Endothelial cell of umbilical vein (primary cell): ENCODE measurements at regions of chr16 and their contacts with region 1.

Region 1: GRCh38 chr16:70477354-70477753 is 23.0 kb downstream of the FCSK start:
- DNase-seq: no peak
- H3K4me3 ChIP-seq: no peak overlapping the region
- H3K27ac ChIP-seq: no peak overlapping the region
- H3K4me1 ChIP-seq: peaks cover 23% of the 10 kb centered on the region
- H3K27me3 ChIP-seq: no peaks in the 10 kb centered on the region
- CTCF ChIP-seq: no peak
- POLR2A ChIP-seq: no peak

Region 2: DNA sequence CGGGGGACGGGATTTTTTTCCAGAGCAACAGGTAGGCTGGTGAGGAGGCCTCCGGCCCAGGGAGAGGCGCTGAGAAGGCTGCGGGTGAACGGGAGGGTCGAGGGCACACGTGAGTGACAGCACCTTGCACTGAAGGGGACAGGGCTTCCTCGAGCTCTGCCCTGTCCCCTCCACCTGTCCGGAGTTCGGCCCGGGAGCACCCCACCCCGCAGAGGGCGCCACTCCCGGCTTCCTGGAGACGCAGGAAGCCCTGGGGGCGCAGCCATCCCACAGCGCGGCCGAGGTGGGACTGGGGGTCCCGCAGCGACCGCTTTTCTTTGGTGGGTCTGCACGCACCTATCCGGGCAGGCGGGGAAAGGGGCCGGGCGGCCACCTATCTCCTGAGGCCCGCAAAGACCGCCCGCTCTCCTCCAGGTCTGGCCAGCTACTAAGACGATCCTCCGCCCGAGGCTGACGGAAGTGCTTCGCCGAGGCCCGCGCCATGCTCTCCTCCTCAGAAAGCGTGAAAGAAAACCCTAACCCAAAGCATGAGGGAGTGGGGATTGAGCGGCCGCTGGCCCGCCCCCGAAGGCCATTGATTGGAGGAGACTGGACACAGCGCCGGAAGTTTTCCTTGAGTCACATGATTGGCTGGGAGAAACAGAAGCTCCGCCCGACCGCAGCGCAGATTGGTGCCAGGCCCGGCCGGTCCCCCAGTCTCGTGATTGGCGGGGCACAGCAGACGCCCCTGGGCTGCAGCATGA is 96.3 kb before region 1 on chr16:
- CTCF ChIA-PET with region 1: interaction called, 6 read pairs
- POLR2A ChIA-PET with region 1: no interaction called
- dilution Hi-C with region 1: no loop called
- intact Hi-C with region 1: loop called (anchors 2 kb)
- DNase-seq: peak; percentile 98
- H3K4me3 ChIP-seq: peak overlapping the region; percentile 51 to 59 (median 54)
- H3K27ac ChIP-seq: no peak overlapping the region
- H3K4me1 ChIP-seq: peaks cover 6% of the 10 kb centered on the region
- H3K27me3 ChIP-seq: no peaks in the 10 kb centered on the region
- CTCF ChIP-seq: peak; percentile 6 to 9
- POLR2A ChIP-seq: peak; percentile 94